ENCODE measurements at regions of chr17 and their contacts with region 1.

Region 1: DNA sequence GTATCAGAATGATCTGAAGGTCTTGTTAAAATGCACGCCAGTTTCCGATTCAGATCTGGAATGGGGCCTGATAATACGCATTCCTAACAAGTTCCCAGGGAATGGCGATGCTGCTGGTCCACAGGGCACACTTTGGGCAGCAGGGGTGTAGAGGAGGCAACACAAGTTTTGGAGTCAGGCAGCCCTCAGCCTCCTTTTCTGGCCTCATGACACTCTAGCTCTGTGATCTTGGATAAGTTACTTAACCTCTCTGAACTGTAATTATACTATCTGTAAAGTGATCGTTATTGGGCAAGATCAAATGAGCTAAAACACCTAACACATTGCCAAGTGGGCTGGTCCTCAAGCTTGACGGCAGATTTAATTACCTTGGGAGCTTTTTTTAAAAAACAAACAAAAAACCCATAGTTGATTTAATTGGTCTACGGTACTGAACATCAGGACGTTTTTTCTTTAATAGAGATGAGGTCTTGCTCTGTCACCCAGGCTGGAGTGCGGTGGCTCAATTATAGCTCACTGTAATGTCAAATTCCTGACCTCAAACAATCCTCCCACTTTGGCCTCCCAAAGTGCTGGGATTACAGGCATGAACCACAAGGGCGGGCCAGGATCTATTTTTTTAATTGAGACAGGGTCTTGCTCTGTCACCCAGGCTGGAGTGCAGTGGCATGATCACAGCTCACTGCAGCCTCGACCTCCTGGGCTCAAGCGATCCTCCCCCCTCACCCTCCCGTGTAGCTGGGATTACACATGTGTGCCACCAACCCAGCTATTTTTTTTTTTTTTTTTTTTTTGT is 10.0 kb upstream of the MRPS23 start:
- DNase-seq: no peak
- H3K4me3 ChIP-seq: no peak overlapping the region
- H3K27ac ChIP-seq: no peak overlapping the region
- H3K4me1 ChIP-seq: peaks cover 7% of the 10 kb centered on the region
- CTCF ChIP-seq: no peak

Region 2: GRCh38 chr17:57892146-57892828 is 32.5 kb after region 1 on chr17:
- CTCF ChIA-PET with region 1: no interaction called
- POLR2A ChIA-PET with region 1: no interaction called
- intact Hi-C with region 1: loop called (anchors 2 kb)
- DNase-seq: peak; percentile 72
- H3K4me3 ChIP-seq: no peak overlapping the region
- H3K27ac ChIP-seq: no peak overlapping the region
- H3K4me1 ChIP-seq: no peaks in the 10 kb centered on the region
- CTCF ChIP-seq: peak; percentile 94

Region 3: DNA sequence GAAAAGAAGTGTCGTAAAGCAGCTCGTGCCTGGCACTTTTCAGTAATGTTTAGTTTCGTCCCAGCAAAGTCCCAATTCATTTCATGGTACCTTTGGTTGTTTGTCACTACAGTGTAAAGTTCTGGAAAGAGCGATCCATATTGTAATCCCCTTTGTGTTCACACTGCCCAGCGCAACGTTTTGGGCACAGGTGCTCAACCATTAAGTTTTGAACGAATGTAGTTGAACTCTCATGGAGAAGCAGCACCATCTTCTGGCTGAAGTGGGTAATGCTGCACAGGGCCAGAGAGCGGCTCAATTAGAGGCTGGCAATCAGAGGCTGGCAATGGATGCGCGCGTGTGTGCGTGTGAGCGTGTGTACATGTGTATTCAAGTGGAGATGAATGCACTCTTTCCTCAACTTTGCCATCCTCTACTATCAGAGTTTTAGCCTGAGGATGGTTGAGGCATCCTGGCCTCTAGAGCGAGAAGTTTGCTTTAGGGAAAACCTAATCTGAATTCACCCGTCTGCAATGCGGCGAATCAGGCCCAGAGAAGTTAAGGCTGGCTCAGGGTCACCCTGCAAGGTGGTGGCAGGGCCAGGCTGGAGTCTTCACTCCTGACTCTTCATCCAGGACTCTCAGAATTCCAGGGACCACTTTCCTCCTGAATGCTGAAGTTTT is 253.3 kb after region 1 on chr17:
- CTCF ChIA-PET with region 1: no interaction called
- POLR2A ChIA-PET with region 1: no interaction called
- intact Hi-C with region 1: loop called (anchors 1 kb)
- DNase-seq: peak; percentile 73
- H3K4me3 ChIP-seq: no peak overlapping the region
- H3K27ac ChIP-seq: no peak overlapping the region
- H3K4me1 ChIP-seq: no peaks in the 10 kb centered on the region
- CTCF ChIP-seq: peak; percentile 95

Measured in OCI-LY7 (cell line).